Sigmoid colon (tissue), 7 donors: ENCODE measurements at regions of chr5 and their contacts with region 1.

Region 1: GRCh38 chr5:59039296-59040023 is 456.6 kb downstream of the RAB3C start:
- DNase-seq: peak; percentile 92
- H3K4me3 ChIP-seq: peak overlapping the region; percentile 49 to 75 (median 66)
- H3K27ac ChIP-seq: peak overlapping the region; percentile 79 to 91 (median 86)
- H3K4me1 ChIP-seq: peaks cover 0 to 74% (median 61%) of the 10 kb centered on the region in 4 donors
- H3K27me3 ChIP-seq: no peaks in the 10 kb centered on the region
- CTCF ChIP-seq: no peak
- EP300 ChIP-seq: peak in 1 of 4 donors; percentile 15
- POLR2A ChIP-seq: peak in 1 of 2 donors; percentile 33

Region 2: DNA sequence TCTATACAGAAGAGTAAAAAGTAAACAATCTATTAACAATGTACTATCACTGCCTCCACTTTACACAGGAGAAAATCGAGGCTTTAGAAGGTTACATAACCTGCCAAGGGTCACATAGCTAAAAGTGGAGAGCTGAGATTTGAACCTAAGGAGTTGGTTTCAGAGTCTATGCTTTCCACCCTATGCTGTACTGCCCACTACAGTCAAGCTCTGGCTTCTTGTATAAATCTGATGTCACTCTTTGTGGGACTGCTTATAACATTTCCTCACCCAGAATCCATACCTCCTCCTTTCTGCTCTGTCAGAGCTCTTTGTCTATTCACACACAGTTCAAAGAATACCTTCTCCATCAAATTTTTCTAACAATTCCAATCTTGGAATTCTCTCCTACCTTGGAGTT is 46.6 kb after region 1 on chr5:
- intact Hi-C with region 1: loop called (anchors 5 kb)
- DNase-seq: no peak
- H3K4me3 ChIP-seq: no peak overlapping the region
- H3K27ac ChIP-seq: peak overlapping the region in 3 of 4 donors; percentile 29 to 48 (median 31)
- H3K4me1 ChIP-seq: peaks cover 0 to 40% (median 12%) of the 10 kb centered on the region in 4 donors
- H3K27me3 ChIP-seq: no peaks in the 10 kb centered on the region
- CTCF ChIP-seq: no peak
- EP300 ChIP-seq: no peak
- POLR2A ChIP-seq: no peak

Region 3: DNA sequence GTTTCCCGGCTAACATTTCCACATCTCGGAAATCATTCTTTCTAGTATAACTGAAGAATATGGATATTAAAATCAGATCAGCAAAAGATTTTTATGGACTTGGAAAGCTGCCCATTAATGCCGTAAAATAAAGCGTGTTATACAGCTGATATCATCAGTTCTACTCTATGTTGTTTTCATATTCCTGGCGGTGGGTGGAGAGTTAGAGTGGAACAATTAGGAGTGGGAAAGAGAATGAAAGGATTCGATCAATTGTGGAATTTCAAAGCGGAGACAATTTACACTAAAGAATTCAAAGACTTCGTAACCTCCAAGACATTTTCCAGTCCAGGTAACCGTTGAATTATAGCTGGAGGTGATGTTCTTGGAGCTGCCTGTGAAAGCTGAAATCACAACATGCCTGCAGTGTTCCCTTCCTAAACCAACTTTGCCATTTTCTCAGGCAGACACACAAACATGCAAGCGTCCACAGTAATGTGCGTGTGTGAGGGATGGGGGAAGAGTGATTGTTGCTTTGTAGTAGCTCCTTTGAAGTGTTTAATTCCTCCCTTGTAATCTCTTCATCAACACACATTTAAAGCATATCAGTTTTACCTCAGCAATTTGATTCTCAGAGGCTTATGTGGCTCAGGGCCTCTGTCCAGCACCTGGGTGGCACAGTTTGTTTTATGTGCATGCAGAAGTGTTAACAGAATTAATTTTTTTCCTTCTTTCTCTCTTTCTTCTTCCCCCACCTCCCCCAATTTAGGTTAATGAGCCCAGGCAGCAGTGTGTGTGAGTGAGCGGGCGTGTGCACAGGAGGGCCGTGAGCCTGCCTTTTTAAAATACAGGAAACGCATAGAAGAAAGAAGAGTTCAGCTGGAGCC is 87.5 kb after region 1 on chr5:
- intact Hi-C with region 1: loop called (anchors 1 kb)
- DNase-seq: no peak
- H3K4me3 ChIP-seq: peak overlapping the region in 3 of 4 donors; percentile 27 to 35 (median 32)
- H3K27ac ChIP-seq: peak overlapping the region; percentile 73 to 85 (median 80)
- H3K4me1 ChIP-seq: peaks cover 0 to 64% (median 54%) of the 10 kb centered on the region in 4 donors
- H3K27me3 ChIP-seq: no peaks in the 10 kb centered on the region
- CTCF ChIP-seq: no peak
- EP300 ChIP-seq: no peak
- POLR2A ChIP-seq: no peak

Region 4: GRCh38 chr5:59169081-59169784 is 129.8 kb after region 1 on chr5:
- intact Hi-C with region 1: loop called (anchors 5 kb)
- DNase-seq: no peak
- H3K4me3 ChIP-seq: no peak overlapping the region
- H3K27ac ChIP-seq: peak overlapping the region in 2 of 4 donors; percentile 0 to 2
- H3K4me1 ChIP-seq: peaks cover 0 to 39% (median 29%) of the 10 kb centered on the region in 4 donors
- H3K27me3 ChIP-seq: no peaks in the 10 kb centered on the region
- CTCF ChIP-seq: no peak
- EP300 ChIP-seq: no peak
- POLR2A ChIP-seq: no peak

Region 5: DNA sequence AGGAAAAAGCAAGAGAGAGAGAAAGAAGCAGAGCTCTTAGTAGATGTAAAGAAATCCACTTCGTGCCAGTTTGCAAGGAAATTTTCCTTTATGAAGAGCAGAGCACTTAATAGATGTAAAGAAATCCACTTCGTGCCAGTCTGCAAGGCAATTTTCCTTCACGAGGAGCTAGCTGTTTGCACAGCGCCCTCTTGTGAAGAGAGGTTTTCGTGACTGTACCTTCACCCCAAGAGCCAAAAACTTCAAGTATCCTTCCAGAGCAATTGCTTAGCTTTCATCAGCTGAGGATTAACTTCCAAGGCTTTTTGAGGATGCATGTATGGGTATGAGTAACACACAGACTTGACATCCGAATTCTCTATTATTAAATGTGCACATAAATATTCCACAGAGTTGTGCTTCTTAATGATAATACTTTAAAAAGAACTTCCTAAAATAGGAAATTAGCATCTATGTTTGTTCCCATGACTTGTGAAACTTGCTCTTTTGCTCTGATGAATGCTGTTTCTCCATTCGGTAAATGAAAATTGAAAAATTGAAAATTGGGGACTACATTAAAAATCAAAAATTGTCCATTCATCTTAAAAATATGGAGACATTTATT is 328.4 kb after region 1 on chr5:
- intact Hi-C with region 1: loop called (anchors 10 kb)
- DNase-seq: peak; percentile 75
- H3K4me3 ChIP-seq: no peak overlapping the region
- H3K27ac ChIP-seq: peak overlapping the region in 3 of 4 donors; percentile 20 to 51 (median 41)
- H3K4me1 ChIP-seq: peaks cover 0 to 40% (median 12%) of the 10 kb centered on the region in 4 donors
- H3K27me3 ChIP-seq: no peaks in the 10 kb centered on the region
- CTCF ChIP-seq: peak; percentile 53 to 71 (median 64)
- EP300 ChIP-seq: no peak
- POLR2A ChIP-seq: no peak